Transverse colon (tissue), 4 donors: ENCODE measurements at regions of chr1 and their contacts with region 1.

Region 1: DNA sequence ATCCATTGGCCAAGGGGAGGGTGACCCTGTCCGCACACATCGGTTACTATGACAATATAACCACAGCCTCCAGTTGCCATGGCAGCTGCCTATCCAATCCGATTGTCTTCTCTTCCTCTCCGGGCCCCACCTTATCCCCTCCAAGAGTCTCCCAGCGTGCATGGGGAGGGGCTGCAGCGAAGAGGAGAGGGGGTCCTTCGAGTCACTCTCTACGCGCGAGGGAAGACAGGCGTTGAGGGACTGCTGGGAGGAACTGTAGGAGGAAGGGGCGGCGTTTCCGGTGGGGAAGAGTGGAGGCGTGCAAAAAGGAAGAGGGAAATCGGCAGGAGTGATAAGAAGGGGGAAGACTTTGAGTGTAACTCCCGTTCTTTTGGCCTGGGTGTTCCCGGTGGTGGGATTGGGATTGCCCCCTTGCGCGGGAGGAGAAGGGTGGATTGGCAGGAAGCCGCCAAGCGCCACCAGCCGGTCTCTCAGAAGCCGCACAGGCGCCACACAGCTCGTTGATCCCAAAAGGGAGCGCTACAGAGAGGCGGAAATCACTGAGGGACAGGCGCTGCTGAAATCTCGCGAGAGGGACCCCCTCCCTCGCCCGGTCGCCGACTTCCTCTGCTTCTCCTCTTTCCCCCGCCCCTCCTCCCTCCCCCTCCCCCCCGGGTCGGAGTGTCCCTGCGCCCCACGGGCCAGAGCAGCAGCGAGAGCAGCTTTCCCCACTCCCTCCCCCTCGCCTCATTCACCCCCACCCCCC is 384 bp upstream of the SMG7 start:
- DNase-seq: peak; percentile 98
- H3K4me3 ChIP-seq: peak overlapping the region; percentile 77 to 99 (median 86)
- H3K27ac ChIP-seq: peak overlapping the region; percentile 93 to 98 (median 96)
- H3K4me1 ChIP-seq: peaks cover 6 to 39% (median 24%) of the 10 kb centered on the region in 4 donors
- H3K27me3 ChIP-seq: no peaks in the 10 kb centered on the region
- CTCF ChIP-seq: peak in 1 of 5 experiments; percentile 18
- EP300 ChIP-seq: no peak
- POLR2A ChIP-seq: peak; percentile 28

Region 2: DNA sequence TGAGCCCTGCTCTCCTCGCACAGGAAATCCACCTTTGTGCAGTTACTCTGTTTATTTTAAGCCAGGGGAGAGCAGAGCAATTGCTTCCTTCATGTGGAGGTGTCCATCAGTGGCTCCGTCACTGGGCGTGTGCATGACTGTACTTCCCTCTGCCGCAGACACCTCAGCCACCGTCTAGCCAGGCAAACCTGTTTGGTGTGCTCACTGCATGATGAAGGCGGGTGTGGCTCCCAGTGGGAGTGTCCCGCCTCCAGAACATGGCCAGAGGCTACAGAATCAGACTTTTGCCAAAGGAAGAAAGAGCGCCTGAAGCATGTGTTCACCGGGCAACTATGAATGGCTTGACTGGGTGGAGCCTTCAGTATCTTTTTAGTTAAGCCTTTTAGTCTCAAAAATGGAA is 312.0 kb before region 1 on chr1:
- in situ Hi-C with region 1: no loop called
- intact Hi-C with region 1: no loop called
- DNase-seq: peak; percentile 91
- H3K4me3 ChIP-seq: no peak overlapping the region
- H3K27ac ChIP-seq: peak overlapping the region; percentile 14 to 60 (median 45)
- H3K4me1 ChIP-seq: peaks cover 0 to 4% (median 0%) of the 10 kb centered on the region in 4 donors
- H3K27me3 ChIP-seq: no peaks in the 10 kb centered on the region
- CTCF ChIP-seq: no peak
- EP300 ChIP-seq: no peak
- POLR2A ChIP-seq: no peak

Region 3: GRCh38 chr1:183281553-183282091 is 190.3 kb before region 1 on chr1:
- in situ Hi-C with region 1: no loop called
- intact Hi-C with region 1: loop called (anchors 10 kb)
- DNase-seq: peak; percentile 89
- H3K4me3 ChIP-seq: no peak overlapping the region
- H3K27ac ChIP-seq: peak overlapping the region; percentile 14 to 76 (median 68)
- H3K4me1 ChIP-seq: peaks cover 0 to 20% (median 5%) of the 10 kb centered on the region in 4 donors
- H3K27me3 ChIP-seq: no peaks in the 10 kb centered on the region
- CTCF ChIP-seq: peak; percentile 88 to 93 (median 90)
- EP300 ChIP-seq: no peak
- POLR2A ChIP-seq: no peak

Region 4: DNA sequence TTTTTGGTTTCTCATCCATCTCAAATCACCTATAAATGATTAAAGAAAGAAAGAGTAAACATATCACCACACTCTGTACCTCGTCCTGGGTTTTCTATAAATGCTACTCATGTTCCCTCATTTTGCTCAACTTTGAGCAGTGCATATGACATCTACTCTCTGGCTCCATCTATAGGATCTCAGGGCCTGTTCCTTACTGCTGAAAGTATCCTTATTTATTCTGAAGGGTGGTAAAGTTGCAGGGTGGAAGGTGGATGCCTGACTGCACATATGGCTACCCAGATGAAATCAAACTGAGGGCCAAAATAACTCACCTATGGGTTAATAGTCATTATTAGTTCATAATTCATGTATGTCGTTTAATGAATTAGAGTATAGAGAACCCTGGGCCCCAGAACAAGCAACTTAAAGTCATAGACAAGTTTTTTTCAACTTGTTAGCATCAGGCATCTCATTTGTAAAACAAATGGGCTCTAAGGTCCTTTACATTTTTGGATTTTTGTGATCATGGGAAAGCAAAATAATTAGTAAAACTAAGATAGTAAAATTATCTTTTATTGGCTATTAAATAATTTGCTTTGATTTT is 71.8 kb after region 1 on chr1:
- in situ Hi-C with region 1: loop called in 1 of 4 experiments (anchors 5 kb)
- intact Hi-C with region 1: no loop called
- DNase-seq: no peak
- H3K4me3 ChIP-seq: no peak overlapping the region
- H3K27ac ChIP-seq: no peak overlapping the region
- H3K4me1 ChIP-seq: peaks cover 0 to 8% (median 2%) of the 10 kb centered on the region in 4 donors
- H3K27me3 ChIP-seq: no peaks in the 10 kb centered on the region
- CTCF ChIP-seq: peak; percentile 58 to 72 (median 68)
- EP300 ChIP-seq: no peak
- POLR2A ChIP-seq: no peak

Region 5: GRCh38 chr1:183635606-183636333 is 163.9 kb after region 1 on chr1 and contains the start of gene ARPC5:
- in situ Hi-C with region 1: loop called in 2 of 4 experiments (anchors 10 to 25 kb)
- intact Hi-C with region 1: loop called (anchors 5 kb)
- DNase-seq: peak; percentile 97
- H3K4me3 ChIP-seq: peak within 1 kb of the TSS; percentile 86 to 98 (median 96)
- H3K27ac ChIP-seq: peak within 1 kb of the TSS; percentile 94 to 99 (median 96)
- H3K4me1 ChIP-seq: peaks cover 9 to 47% (median 27%) of the 10 kb centered on the region in 4 donors
- H3K27me3 ChIP-seq: no peaks in the 10 kb centered on the region
- CTCF ChIP-seq: no peak
- EP300 ChIP-seq: no peak
- POLR2A ChIP-seq: peak; percentile 97
- total RNA-seq, gene ARPC5: 22.7 to 123 (median 74.1) TPM

Region 6: DNA sequence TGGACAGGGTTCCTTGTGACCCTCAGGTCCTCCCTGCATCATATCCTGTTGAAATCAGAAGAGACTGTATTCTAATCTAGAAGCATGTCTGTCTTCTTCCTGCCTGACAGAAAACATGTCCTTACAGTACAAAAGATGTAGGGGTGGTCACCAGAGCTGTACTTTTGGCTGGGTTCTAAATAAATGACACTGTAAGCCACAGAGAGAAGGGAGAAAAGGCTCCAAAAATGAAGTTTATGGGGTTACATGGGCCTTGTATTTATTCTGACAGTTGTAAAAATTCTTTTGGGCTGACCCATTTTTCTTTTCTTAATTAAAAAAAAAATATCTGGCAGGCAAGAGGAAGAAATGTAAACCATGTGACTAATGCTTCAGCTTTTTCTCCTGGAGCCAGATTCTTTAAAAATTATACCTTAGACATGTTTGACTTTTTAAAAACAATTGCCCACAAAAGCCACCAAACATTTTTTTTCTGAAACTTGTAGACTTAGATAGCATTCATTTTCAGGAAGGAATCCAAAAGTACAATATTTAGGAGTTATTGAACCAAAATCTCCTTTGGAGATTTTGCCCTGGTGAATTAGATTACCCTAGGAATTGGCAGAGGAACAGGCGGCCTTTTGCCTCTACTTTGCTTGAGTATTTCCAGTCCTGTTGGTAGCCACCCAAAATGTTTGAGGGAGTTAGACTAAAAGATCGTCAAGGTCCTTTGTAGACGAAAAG is 350.1 kb after region 1 on chr1:
- in situ Hi-C with region 1: no loop called
- intact Hi-C with region 1: no loop called
- DNase-seq: no peak
- H3K4me3 ChIP-seq: no peak overlapping the region
- H3K27ac ChIP-seq: peak overlapping the region; percentile 55 to 80 (median 72)
- H3K4me1 ChIP-seq: peaks cover 8 to 31% (median 11%) of the 10 kb centered on the region in 4 donors
- H3K27me3 ChIP-seq: no peaks in the 10 kb centered on the region
- CTCF ChIP-seq: no peak
- EP300 ChIP-seq: no peak
- POLR2A ChIP-seq: no peak

Region 7: GRCh38 chr1:183915625-183916510 is 444.0 kb after region 1 on chr1:
- in situ Hi-C with region 1: loop called in 1 of 4 experiments (anchors 25 kb)
- intact Hi-C with region 1: no loop called
- DNase-seq: peak; percentile 68
- H3K4me3 ChIP-seq: no peak overlapping the region
- H3K27ac ChIP-seq: peak overlapping the region; percentile 33 to 65 (median 54)
- H3K4me1 ChIP-seq: peaks cover 0 to 23% (median 6%) of the 10 kb centered on the region in 4 donors
- H3K27me3 ChIP-seq: no peaks in the 10 kb centered on the region
- CTCF ChIP-seq: peak; percentile 81 to 83 (median 82)
- EP300 ChIP-seq: no peak
- POLR2A ChIP-seq: no peak